ENCODE measurements at regions of chr3 and their contacts with region 1.

Region 1: DNA sequence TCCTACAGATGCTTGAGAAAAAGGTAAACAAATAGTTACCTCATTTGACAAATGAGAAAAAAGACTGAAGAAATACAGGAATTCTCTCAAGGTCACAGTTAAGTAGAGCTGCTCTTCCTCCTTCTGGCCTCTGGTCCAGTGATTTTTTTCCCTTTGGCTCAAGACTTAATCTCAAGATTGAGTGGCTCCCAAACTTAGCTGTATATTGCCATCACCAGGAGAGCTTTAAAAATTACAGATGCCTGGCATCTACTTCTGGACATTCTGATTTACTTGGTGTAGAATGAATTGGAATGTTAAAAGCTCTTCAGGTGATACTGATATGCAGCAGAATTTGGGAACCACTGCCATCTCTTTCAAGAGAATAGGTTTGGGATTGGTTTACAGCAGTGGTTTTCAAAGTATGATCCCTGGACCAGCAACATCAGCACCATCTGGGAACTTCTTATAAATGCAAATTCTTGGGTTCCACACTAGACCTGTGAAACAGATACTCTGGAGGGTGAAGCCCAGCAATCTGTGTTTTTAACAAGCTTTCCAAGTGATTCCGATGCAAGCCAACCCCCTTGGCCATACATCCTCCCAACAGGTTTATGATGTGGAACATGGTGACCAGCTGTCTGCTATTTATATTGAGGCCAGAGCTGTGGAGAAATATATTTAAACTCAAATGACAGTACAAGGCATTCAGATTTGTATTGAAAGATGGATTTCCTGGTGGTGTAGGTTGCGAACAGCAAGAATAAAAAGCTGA is 333.0 kb upstream of the RARB start:
- DNase-seq: no peak
- ATAC-seq: no peak
- H3K4me3 ChIP-seq: no peak overlapping the region
- H3K27ac ChIP-seq: no peak overlapping the region
- H3K4me1 ChIP-seq: no peaks in the 10 kb centered on the region
- H3K27me3 ChIP-seq: no peaks in the 10 kb centered on the region
- CTCF ChIP-seq: no peak

Region 2: GRCh38 chr3:24773798-24774197 is 321.3 kb before region 1 on chr3:
- intact Hi-C with region 1: loop called in 1 of 2 experiments (anchors 5 kb)
- DNase-seq: peak; percentile 22 to 63
- ATAC-seq: peak; percentile 48 to 80 (median 66)
- H3K4me3 ChIP-seq: no peak overlapping the region
- H3K27ac ChIP-seq: no peak overlapping the region
- H3K4me1 ChIP-seq: no peaks in the 10 kb centered on the region
- H3K27me3 ChIP-seq: no peaks in the 10 kb centered on the region
- CTCF ChIP-seq: peak; percentile 75

Region 3: DNA sequence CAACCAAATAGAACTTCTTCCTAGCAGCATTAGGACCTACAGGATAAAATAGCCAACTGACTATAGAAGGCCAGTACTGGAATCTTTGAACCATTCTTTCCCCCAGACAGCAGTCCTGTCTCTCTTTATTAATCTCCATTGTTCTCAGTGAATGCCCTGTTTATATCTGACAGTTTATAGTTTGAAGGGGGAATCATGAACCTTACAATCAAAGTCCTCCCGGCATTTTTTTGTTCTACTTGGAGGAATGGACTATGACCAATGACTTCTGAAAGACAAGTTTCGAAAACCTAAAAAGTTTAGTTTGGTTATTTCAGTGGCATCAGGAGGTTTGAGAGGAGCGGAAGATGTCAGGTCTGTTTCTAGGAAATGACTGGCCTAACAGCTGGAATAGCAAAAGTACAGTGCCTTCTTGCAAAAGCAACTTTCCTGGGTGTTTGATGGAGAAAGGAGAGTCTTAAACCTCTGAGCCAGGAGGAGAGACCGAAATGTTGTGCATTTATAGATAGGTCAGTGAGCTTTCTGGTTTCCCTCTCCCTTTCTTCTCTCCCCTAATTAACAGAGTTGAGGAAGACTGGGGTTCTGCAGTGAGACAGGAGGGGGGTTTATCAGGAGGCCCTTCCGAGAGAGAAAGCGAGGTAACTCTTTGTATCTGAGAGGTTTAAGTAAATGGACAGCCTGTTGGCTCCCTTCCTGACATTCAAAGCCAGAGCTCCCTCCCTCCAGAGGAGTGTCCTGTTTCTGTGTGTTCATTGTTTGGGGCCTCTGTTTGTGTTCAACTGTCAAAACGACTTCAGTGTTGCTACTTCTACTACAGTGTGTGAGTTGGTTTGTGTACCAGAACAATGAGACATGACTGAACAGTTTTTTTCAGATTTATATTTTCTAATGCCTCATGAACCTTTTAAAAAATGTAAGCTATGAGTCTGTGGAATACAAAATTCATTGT is 50.1 kb before region 1 on chr3:
- intact Hi-C with region 1: no loop called
- DNase-seq: no peak
- ATAC-seq: peak in 2 of 4 donors; percentile 38 to 54
- H3K4me3 ChIP-seq: no peak overlapping the region
- H3K27ac ChIP-seq: no peak overlapping the region
- H3K4me1 ChIP-seq: peaks cover 10% of the 10 kb centered on the region
- H3K27me3 ChIP-seq: no peaks in the 10 kb centered on the region
- CTCF ChIP-seq: no peak

Measured in psoas muscle (tissue), 8 donors.